Heart left ventricle (tissue), 16 donors: ENCODE measurements at regions of chr16 and their contacts with region 1.

Region 1: DNA sequence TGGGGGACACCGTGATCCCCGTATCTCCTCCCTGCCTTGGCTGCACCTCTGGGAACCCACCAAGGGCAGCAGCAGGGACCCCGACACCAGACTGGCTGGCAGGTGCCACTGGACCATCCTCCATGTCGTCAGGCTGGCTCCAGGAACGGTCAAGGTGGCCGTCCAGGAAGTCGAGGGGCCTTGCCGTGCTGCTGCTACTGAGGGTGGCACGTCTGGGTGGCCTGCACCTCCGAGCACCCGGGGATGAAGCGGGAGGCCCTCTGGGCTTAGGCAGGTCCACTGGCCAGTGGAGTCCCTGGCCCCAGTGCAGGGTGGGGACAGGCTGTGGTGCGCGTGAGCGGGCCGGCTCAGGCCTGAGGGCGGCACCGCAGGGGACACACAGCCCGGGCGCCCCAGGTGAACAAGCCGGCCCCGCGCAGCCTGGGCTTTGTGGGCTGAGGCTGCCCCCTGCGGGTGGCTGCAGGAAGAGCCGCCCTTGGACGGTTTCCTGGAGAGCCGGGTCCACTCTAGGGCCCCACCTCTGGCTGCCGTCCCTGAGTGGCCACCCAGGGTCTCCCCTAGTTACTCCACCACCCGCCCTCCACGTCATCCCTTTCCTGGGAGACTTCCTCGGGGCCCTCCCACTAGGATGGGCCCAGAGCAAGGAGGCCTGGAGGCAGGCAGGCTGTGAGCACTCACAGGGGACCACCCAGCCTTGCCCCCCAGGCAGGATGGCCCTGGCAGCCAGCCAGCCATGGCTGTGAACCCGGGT is 42.8 kb upstream of the ZC3H18 start:
- DNase-seq: peak; percentile 57 to 82 (median 58)
- ATAC-seq: peak; percentile 43 to 73 (median 63)
- H3K4me3 ChIP-seq: no peak overlapping the region
- H3K27ac ChIP-seq: no peak overlapping the region
- H3K4me1 ChIP-seq: peaks cover 0 to 28% (median 12%) of the 10 kb centered on the region in 12 donors
- H3K27me3 ChIP-seq: no peaks in the 10 kb centered on the region
- CTCF ChIP-seq: peak; percentile 85 to 96 (median 92)
- POLR2A ChIP-seq: no peak

Region 2: DNA sequence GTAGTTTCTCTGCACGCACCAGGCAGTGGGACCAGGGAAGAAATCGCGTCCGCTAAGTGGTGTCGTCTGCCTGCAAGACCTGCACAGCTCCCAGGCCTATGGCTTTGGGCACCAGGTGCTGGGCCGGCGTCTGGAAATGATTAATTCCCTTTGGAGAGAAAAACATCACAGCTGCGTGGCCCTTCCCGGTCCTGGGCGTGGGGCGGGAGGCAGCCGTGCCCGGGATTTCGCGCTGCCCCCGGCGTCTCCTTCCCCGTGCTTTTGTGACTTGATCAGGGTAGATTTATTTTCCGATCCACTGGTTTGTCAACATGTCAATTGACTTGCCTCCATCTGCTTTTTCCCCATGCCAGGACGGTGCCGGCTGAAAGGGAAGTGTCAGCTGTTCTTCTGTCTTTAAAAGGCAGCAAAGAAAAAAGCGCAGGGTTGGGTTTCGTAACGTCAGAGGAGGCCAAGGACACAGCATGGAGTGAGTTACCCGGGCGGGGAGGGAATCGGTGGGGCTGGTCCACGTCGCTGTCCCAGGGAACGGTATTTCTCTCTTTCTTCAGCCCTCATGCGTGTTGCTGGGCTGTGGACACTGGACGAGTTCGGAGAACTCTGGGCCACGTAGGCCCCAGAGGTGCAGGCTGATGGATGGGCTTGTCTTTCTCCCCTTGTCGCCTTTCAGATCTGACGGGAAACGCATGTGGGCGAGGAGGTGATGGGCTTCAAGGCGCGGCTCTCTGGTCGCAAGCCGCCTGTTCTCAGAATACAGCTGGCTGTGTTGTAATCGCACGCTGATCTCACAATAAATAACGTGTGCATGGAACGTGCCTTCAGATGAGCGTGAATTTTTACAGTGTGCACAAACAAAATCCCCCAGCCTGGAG is 332.7 kb before region 1 on chr16:
- intact Hi-C with region 1: loop called in 1 of 10 experiments (anchors 10 kb)
- DNase-seq: no peak
- ATAC-seq: peak; percentile 3 to 29 (median 14)
- H3K4me3 ChIP-seq: no peak overlapping the region
- H3K27ac ChIP-seq: no peak overlapping the region
- H3K4me1 ChIP-seq: no peaks in the 10 kb centered on the region
- H3K27me3 ChIP-seq: no peaks in the 10 kb centered on the region
- CTCF ChIP-seq: peak in 1 of 12 donors; percentile 21
- POLR2A ChIP-seq: no peak

Region 3: GRCh38 chr16:88442727-88443576 is 84.4 kb before region 1 on chr16:
- intact Hi-C with region 1: loop called (anchors 1 to 2 kb)
- DNase-seq: peak; percentile 73 to 90 (median 76)
- ATAC-seq: peak; percentile 71 to 89 (median 85)
- H3K4me3 ChIP-seq: no peak overlapping the region
- H3K27ac ChIP-seq: no peak overlapping the region
- H3K4me1 ChIP-seq: peaks cover 0 to 9% (median 0%) of the 10 kb centered on the region in 12 donors
- H3K27me3 ChIP-seq: peaks cover 0 to 15% (median 0%) of the 10 kb centered on the region in 9 donors
- CTCF ChIP-seq: peak; percentile 93 to 98 (median 94)
- POLR2A ChIP-seq: no peak

Region 4: DNA sequence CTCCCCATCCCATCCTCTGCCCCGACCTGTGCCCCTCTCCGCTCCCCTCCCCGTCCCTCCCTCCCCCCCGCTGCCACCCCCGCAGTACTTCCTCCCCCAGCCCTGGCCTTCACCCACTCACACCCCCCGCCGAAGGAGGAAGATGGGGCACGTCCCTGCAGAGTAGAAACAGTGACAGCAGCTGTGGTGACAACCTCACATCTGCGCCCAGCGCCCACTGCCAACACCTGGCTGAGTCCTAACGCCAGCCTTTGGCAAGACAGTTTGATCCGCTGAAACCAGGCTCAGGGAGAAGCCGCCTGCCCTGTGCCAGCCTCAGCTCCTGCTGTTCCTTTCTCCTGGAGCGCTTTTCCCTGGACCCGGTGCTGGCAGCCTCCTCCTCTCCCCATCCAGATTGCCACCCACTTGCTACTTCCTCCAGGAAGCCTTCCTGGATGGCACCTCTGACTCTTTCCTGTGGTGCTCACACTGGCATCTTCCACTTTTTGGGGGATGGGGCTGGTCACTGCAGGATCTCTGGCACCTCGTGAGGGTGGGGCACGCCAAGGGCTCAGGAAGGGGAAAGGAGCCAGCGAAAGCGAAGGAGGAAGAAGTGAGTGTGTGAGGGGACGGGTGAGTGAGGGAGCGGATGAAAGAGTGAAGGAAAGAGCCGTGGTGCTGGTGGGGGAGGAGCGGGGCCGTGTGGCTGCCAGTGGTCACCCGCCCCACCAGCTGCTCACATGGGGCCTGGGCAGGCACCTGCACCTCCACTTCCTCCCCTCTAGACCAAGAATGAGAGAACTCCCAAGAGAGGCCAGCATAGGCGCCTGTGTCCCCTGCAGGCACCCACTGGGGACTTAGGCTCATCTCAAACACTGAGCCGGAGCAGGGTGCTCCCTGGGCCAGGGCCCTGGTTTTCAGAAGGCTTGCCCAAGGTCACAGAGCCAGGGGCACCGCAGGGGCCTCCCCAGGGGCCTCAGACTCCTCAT is 47.3 kb before region 1 on chr16:
- intact Hi-C with region 1: no loop called
- DNase-seq: peak in 1 of 5 donors; percentile 46
- ATAC-seq: peak; percentile 12 to 62 (median 52)
- H3K4me3 ChIP-seq: no peak overlapping the region
- H3K27ac ChIP-seq: peak overlapping the region in 2 of 12 donors; percentile 34 to 64
- H3K4me1 ChIP-seq: peaks cover 0 to 34% (median 3%) of the 10 kb centered on the region in 12 donors
- H3K27me3 ChIP-seq: no peaks in the 10 kb centered on the region
- CTCF ChIP-seq: no peak
- POLR2A ChIP-seq: no peak